CD8-positive, alpha-beta memory T cell (primary cell): ENCODE measurements at regions of chr17 and their contacts with region 1.

Region 1: DNA sequence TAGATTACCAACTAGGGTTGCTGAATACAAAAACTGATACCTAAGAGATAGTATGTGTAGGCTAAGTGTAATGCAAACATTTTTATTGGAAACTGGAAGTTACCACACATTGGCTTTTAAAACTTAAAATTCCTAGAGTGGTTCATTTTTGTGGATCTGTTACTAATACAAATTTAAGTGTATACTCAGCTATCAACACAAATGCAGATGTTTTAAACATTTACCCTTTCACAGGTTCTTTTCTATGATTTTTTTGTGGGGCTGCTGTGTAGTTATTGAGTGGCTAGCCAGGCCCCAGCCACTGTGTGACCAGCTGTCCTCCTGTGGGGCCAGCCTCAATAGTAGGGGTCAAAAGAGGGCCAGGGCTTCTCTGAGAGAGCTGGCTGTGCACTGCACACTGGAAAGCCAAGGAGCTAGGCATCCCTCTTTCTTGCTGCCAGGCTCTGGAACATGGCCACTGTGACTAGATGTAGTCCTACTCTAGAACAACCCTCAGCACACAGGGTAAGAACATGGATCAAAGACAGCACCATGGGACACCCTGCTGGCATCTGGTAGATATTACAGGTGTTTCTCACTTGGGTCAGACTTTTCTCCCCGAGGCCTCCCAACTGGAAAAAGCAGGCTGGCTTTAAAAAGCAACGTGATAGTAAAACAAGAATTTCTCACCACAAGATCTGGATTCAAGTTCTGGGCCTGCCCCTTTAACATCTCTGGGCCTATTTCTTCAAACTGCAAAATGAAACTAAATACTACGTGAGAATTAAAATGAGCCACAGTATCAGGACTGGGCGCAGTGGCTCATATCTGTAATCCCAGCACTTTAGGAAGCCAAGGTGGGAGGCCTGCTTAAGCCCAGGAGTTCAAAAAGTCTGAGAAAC is 7.3 kb upstream of the VEZF1 start:
- DNase-seq: peak; percentile 12 to 61 (median 41)
- H3K4me3 ChIP-seq: no peak overlapping the region
- H3K4me3 Mint-ChIP-seq: peak overlapping the region in 4 of 7 donors; percentile 5 to 74 (median 22)
- H3K27ac ChIP-seq: no peak overlapping the region
- H3K27ac Mint-ChIP-seq: peak overlapping the region; percentile 20 to 89 (median 80)
- H3K4me1 ChIP-seq: peaks cover 30% of the 10 kb centered on the region
- H3K4me1 Mint-ChIP-seq: peaks cover 32 to 48% (median 44%) of the 10 kb centered on the region in 3 donors
- H3K27me3 ChIP-seq: no peaks in the 10 kb centered on the region
- H3K27me3 Mint-ChIP-seq: no peaks in the 10 kb centered on the region

Region 2: DNA sequence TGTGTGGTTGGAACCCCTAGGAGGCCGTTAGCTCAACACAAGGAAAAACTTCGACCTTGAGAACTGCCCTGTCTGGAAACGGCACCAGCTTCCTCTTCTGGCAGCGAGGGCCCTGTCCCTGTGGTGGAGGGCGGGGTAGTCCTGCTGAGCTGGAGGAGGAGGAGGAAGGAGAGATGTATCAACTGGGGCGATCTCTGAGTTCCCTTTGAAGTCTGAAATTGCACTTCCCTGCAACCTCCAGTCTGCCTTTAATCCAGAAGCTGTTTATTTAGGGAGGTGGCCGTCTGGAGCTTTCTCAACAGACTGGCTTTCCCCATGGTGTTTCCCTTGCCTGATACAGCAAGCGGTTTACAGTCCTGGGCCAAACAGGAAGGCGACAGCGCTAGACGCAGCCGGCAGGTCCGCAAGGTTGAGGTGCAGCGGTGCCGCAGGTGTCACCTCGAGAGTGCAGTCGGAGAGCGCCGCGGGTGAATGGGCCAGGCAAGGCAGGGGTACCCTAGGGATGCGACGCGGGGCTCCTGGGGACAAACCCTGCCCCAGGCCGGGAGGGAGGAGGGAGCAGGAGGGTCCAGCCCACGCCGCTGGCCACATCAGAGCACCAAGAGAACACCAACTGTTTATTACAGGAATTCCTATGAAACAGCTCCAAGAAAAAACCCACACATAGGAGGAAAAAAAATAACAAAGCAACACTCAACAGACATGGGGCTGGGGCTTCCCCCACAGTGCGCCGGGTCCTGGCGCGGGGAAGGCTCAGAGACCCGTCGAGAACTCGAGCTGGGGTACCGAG is 134.1 kb before region 1 on chr17:
- CTCF ChIA-PET with region 1: interaction called, 54 read pairs
- POLR2A ChIA-PET with region 1: interaction called, 5 read pairs
- DNase-seq: peak; percentile 6 to 58 (median 22)
- H3K4me3 ChIP-seq: peak overlapping the region; percentile 14
- H3K4me3 Mint-ChIP-seq: peak overlapping the region; percentile 25 to 84 (median 79)
- H3K27ac ChIP-seq: no peak overlapping the region
- H3K27ac Mint-ChIP-seq: peak overlapping the region in 4 of 8 donors; percentile 47 to 93 (median 62)
- H3K4me1 ChIP-seq: peaks cover 13% of the 10 kb centered on the region
- H3K4me1 Mint-ChIP-seq: peaks cover 10 to 17% (median 11%) of the 10 kb centered on the region in 3 donors
- H3K27me3 ChIP-seq: peaks cover 4% of the 10 kb centered on the region
- H3K27me3 Mint-ChIP-seq: peaks cover 24 to 40% of the 10 kb centered on the region in 2 donors

Region 3: GRCh38 chr17:57892146-57892828 is 103.0 kb before region 1 on chr17:
- CTCF ChIA-PET with region 1: interaction called, 53 read pairs
- POLR2A ChIA-PET with region 1: interaction called, 3 read pairs
- DNase-seq: peak; percentile 56 to 79 (median 68)
- H3K4me3 ChIP-seq: no peak overlapping the region
- H3K4me3 Mint-ChIP-seq: no peak overlapping the region
- H3K27ac ChIP-seq: no peak overlapping the region
- H3K27ac Mint-ChIP-seq: peak overlapping the region in 1 of 8 donors; percentile 93
- H3K4me1 ChIP-seq: peaks cover 7% of the 10 kb centered on the region
- H3K4me1 Mint-ChIP-seq: peaks cover 0 to 5% (median 3%) of the 10 kb centered on the region in 3 donors
- H3K27me3 ChIP-seq: peaks cover 3% of the 10 kb centered on the region
- H3K27me3 Mint-ChIP-seq: peaks cover 9 to 18% of the 10 kb centered on the region in 2 donors

Region 4: GRCh38 chr17:57955183-57955931 is 40.0 kb before region 1 on chr17 and contains the start of gene CUEDC1:
- CTCF ChIA-PET with region 1: interaction called, 19 read pairs
- POLR2A ChIA-PET with region 1: interaction called, 3 read pairs
- DNase-seq: peak; percentile 45 to 68 (median 46)
- H3K4me3 ChIP-seq: peak within 1 kb of the TSS; percentile 68
- H3K4me3 Mint-ChIP-seq: peak within 1 kb of the TSS; percentile 77 to 93 (median 79)
- H3K27ac ChIP-seq: no peak within 1 kb of the TSS
- H3K27ac Mint-ChIP-seq: peak within 1 kb of the TSS in 5 of 8 donors; percentile 8 to 88 (median 66)
- H3K4me1 ChIP-seq: peaks cover 14% of the 10 kb centered on the region
- H3K4me1 Mint-ChIP-seq: peaks cover 18 to 43% (median 19%) of the 10 kb centered on the region in 3 donors
- H3K27me3 ChIP-seq: peaks cover 10% of the 10 kb centered on the region
- H3K27me3 Mint-ChIP-seq: peaks cover 19 to 26% of the 10 kb centered on the region in 2 donors
- total RNA-seq, gene CUEDC1: 0.33 to 0.73 TPM

Region 5: GRCh38 chr17:58046239-58047094 is 51.2 kb after region 1 on chr17:
- CTCF ChIA-PET with region 1: no interaction called
- POLR2A ChIA-PET with region 1: no interaction called
- DNase-seq: no peak
- H3K4me3 ChIP-seq: no peak overlapping the region
- H3K4me3 Mint-ChIP-seq: no peak overlapping the region
- H3K27ac ChIP-seq: no peak overlapping the region
- H3K27ac Mint-ChIP-seq: peak overlapping the region in 1 of 8 donors; percentile 30
- H3K4me1 ChIP-seq: no peaks in the 10 kb centered on the region
- H3K4me1 Mint-ChIP-seq: no peaks in the 10 kb centered on the region
- H3K27me3 ChIP-seq: peaks cover 7% of the 10 kb centered on the region
- H3K27me3 Mint-ChIP-seq: peaks cover 17 to 50% of the 10 kb centered on the region in 2 donors